Activated CD4-positive, alpha-beta memory T cell treated with anti-CD3 and anti-CD28 coated beads for 36 hours (primary cell): ENCODE measurements at regions of chr1 and their contacts with region 1.

Region 1: DNA sequence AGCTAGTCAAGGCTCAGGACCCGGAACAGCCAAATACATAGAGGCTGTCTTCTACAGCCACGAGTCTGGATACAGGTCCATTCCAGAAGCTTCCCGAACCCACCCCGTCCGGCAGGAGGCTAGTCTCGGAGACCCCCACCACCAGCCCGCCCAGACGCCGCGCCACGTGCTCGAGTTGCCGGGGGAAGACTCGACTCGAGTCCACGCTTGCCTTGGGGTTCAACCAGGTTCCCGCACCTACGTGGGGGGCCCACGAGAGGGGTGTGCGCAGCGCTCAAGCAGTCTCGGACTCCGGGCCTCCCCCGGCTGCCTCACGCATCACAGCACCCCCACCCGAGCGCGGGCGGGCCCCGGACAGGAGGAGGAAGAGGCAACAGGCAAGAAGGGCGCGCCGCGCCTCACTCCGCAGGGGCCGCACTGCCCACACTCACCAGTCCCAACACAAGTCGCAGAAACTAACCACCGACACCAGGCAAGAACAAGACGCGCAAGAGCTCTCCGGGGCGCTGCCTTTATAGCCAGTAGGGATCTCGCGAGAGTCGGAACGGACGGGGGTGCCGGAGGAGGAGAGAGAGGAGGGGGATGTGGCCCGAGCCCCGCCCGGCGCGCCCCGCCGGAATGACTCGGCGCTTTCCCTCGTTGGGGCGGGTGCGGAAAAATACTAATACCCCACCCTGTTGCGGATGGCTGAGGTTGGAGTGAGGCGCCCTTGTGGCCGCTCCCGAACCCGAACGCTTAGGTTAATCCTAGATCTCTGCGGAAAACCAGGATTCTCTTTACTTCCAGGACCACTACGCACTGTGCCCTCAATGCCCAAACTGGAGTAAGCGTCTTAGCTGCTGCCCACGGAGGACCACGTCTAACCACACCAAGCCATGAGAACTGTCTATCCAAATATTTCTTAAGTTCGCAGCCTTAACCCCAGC is at the start of gene PRDX1:
- DNase-seq: peak; percentile 98
- H3K4me3 Mint-ChIP-seq: peak within 1 kb of the TSS; percentile 94
- H3K27ac Mint-ChIP-seq: peak within 1 kb of the TSS; percentile 94
- H3K4me1 Mint-ChIP-seq: peaks cover 43% of the 10 kb centered on the region
- H3K27me3 Mint-ChIP-seq: peaks cover 1% of the 10 kb centered on the region
- total RNA-seq, gene PRDX1: 479 to 481 TPM

Region 2: DNA sequence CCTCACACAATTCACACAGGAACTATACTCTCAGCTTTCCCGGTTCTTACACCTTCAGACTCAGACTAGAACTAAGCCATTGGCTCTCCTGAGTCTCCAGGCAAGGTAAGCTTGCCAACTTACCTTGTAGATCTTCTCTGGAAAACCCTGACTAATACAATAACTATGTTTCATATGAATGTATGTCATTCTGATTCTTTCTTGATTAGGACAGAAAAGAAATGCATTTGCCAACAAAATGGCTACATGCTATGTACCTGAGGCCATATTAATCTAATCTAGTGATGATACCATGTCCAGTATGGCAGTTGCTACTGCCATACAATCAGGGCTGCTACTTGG is 305.5 kb before region 1 on chr1:
- CTCF ChIA-PET with region 1: no interaction called
- POLR2A ChIA-PET with region 1: no interaction called
- intact Hi-C with region 1: no loop called
- DNase-seq: no peak
- H3K4me3 Mint-ChIP-seq: no peak overlapping the region
- H3K27ac Mint-ChIP-seq: no peak overlapping the region
- H3K4me1 Mint-ChIP-seq: peaks cover 3% of the 10 kb centered on the region
- H3K27me3 Mint-ChIP-seq: peaks cover 4% of the 10 kb centered on the region

Region 3: GRCh38 chr1:45339789-45340570 is 181.7 kb before region 1 on chr1 and contains the starts of genes MUTYH and TOE1:
- CTCF ChIA-PET with region 1: interaction called, 4 read pairs
- POLR2A ChIA-PET with region 1: interaction called, 22 read pairs
- intact Hi-C with region 1: no loop called
- DNase-seq: peak; percentile 97
- H3K4me3 Mint-ChIP-seq: peak within 1 kb of the TSS; percentile 93
- H3K27ac Mint-ChIP-seq: peak within 1 kb of the TSS; percentile 98
- H3K4me1 Mint-ChIP-seq: peaks cover 34% of the 10 kb centered on the region
- H3K27me3 Mint-ChIP-seq: no peaks in the 10 kb centered on the region
- total RNA-seq, gene MUTYH: 49.2 to 51.8 TPM
- total RNA-seq, gene TOE1: 22.8 to 23.1 TPM

Region 4: GRCh38 chr1:45535988-45536766 is 14.5 kb after region 1 on chr1:
- CTCF ChIA-PET with region 1: interaction called, 4 read pairs
- POLR2A ChIA-PET with region 1: interaction called, 8 read pairs
- intact Hi-C with region 1: loop called (anchors 1 kb)
- DNase-seq: no peak
- H3K4me3 Mint-ChIP-seq: no peak overlapping the region
- H3K27ac Mint-ChIP-seq: no peak overlapping the region
- H3K4me1 Mint-ChIP-seq: peaks cover 12% of the 10 kb centered on the region
- H3K27me3 Mint-ChIP-seq: no peaks in the 10 kb centered on the region

Region 5: GRCh38 chr1:45550401-45551351 is 29.0 kb after region 1 on chr1 and contains the start of gene AKR1A1:
- CTCF ChIA-PET with region 1: interaction called, 7 read pairs
- POLR2A ChIA-PET with region 1: interaction called, 50 read pairs
- intact Hi-C with region 1: loop called (anchors 1 kb)
- DNase-seq: peak; percentile 92
- H3K4me3 Mint-ChIP-seq: peak within 1 kb of the TSS; percentile 94
- H3K27ac Mint-ChIP-seq: peak within 1 kb of the TSS; percentile 91
- H3K4me1 Mint-ChIP-seq: peaks cover 19% of the 10 kb centered on the region
- H3K27me3 Mint-ChIP-seq: no peaks in the 10 kb centered on the region
- total RNA-seq, gene AKR1A1: 184 TPM

Region 6: GRCh38 chr1:45569962-45570581 is 48.4 kb after region 1 on chr1:
- CTCF ChIA-PET with region 1: interaction called, 58 read pairs
- POLR2A ChIA-PET with region 1: interaction called, 6 read pairs
- intact Hi-C with region 1: loop called (anchors 2 kb)
- DNase-seq: peak; percentile 81
- H3K4me3 Mint-ChIP-seq: no peak overlapping the region
- H3K27ac Mint-ChIP-seq: peak overlapping the region; percentile 16
- H3K4me1 Mint-ChIP-seq: no peaks in the 10 kb centered on the region
- H3K27me3 Mint-ChIP-seq: no peaks in the 10 kb centered on the region

Region 7: GRCh38 chr1:45620588-45621500 is 99.2 kb after region 1 on chr1:
- CTCF ChIA-PET with region 1: no interaction called
- POLR2A ChIA-PET with region 1: no interaction called
- intact Hi-C with region 1: no loop called
- DNase-seq: no peak
- H3K4me3 Mint-ChIP-seq: no peak overlapping the region
- H3K27ac Mint-ChIP-seq: peak overlapping the region; percentile 33
- H3K4me1 Mint-ChIP-seq: no peaks in the 10 kb centered on the region
- H3K27me3 Mint-ChIP-seq: no peaks in the 10 kb centered on the region

Region 8: GRCh38 chr1:45679123-45679522 is 157.5 kb after region 1 on chr1:
- CTCF ChIA-PET with region 1: no interaction called
- POLR2A ChIA-PET with region 1: no interaction called
- intact Hi-C with region 1: no loop called
- DNase-seq: no peak
- H3K4me3 Mint-ChIP-seq: no peak overlapping the region
- H3K27ac Mint-ChIP-seq: no peak overlapping the region
- H3K4me1 Mint-ChIP-seq: peaks cover 71% of the 10 kb centered on the region
- H3K27me3 Mint-ChIP-seq: no peaks in the 10 kb centered on the region

Region 9: DNA sequence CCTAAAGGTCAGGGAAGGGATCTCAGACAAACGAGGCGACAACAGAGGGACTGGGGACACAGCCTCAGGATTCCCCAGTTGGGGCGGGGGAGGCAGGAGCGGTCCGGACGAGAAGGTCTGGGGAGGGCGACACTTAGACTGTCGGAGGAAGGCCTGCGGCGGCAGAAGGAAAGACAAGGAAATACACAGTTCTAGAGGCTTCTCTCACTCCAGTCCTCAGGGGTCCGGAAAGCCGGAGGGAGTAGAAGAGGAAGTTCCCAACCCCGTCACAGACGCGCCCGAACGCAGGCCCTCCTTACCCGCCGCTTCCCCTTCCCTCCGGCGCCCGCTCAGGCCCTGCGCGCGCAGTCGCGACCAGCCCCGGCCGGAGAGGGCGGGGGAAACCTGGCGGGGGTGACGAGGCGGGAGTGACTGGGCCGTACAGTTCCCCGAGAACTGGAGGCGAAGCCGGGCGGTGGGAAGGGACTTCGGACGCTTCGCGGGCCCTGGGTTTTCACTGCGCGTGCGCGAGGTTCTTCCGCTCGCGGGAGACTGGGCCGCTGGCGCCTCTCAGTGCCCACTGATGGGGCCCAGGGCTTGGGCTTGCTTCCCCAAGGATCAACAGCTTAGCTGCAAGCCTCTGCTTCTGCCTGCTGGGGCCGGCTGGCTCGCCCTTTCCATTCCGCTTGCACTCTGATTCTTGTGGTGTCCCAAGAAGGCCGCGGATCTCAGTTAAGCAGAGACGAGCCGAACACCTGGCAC is 228.8 kb after region 1 on chr1 and contains the start of gene IPP:
- CTCF ChIA-PET with region 1: no interaction called
- POLR2A ChIA-PET with region 1: no interaction called
- intact Hi-C with region 1: loop called (anchors 1 kb)
- DNase-seq: peak; percentile 97
- H3K4me3 Mint-ChIP-seq: peak within 1 kb of the TSS; percentile 91
- H3K27ac Mint-ChIP-seq: peak within 1 kb of the TSS; percentile 95
- H3K4me1 Mint-ChIP-seq: peaks cover 33% of the 10 kb centered on the region
- H3K27me3 Mint-ChIP-seq: no peaks in the 10 kb centered on the region
- total RNA-seq, gene IPP: 21.4 to 22.9 TPM